ENCODE measurements at regions of chr22 and their contacts with region 1.

Region 1: DNA sequence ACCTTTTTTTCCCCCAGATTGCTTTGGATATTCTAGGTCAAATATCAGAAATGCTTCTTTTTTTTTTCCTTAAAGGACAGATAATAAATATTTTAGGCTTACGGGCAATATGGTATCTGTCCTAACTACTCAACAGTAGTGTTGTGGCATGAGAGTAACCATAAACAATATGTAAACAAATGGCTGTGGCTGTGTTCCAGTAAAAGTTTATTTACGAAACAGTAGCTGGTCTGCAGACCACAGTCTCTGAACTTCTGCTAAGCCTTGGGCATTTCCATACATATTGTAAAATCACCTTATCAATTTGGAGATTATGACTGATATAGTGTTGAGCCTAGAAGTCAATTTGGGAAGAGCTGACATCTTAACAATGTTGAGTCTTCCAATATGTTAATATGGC is 139.0 kb upstream of the PITPNB start:
- DNase-seq: no peak
- H3K4me3 ChIP-seq: no peak overlapping the region
- H3K27ac ChIP-seq: no peak overlapping the region
- H3K4me1 ChIP-seq: no peaks in the 10 kb centered on the region
- H3K27me3 ChIP-seq: no peaks in the 10 kb centered on the region
- CTCF ChIP-seq: no peak

Region 2: DNA sequence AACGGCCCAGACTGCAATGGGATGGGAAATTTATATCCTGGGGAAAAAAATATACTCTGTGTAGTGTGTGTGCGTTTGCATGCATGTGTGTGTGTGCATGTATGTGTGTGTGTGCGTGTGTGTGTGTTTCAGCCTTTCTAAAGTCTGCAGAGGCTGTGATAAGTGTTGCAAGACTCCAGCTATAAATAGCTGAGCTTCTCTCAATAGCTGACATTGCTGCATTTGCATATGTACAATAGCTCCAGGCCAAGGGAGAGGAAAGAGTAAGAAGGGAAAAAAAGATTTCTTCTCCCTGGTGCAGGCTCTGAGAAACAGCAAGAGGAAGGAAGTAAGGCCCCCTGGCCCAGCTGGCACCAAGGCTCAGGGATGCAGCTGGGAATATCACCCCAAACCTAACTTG is 739.5 kb before region 1 on chr22:
- CTCF ChIA-PET with region 1: no interaction called
- POLR2A ChIA-PET with region 1: no interaction called
- intact Hi-C with region 1: no loop called
- DNase-seq: peak in 1 of 2 experiments; percentile 0
- H3K4me3 ChIP-seq: no peak overlapping the region
- H3K27ac ChIP-seq: no peak overlapping the region
- H3K4me1 ChIP-seq: no peaks in the 10 kb centered on the region
- H3K27me3 ChIP-seq: no peaks in the 10 kb centered on the region
- CTCF ChIP-seq: no peak

Region 3: GRCh38 chr22:27990879-27991278 is 67.2 kb before region 1 on chr22:
- CTCF ChIA-PET with region 1: no interaction called
- POLR2A ChIA-PET with region 1: no interaction called
- intact Hi-C with region 1: no loop called
- DNase-seq: no peak
- H3K4me3 ChIP-seq: no peak overlapping the region
- H3K27ac ChIP-seq: no peak overlapping the region
- H3K4me1 ChIP-seq: no peaks in the 10 kb centered on the region
- H3K27me3 ChIP-seq: no peaks in the 10 kb centered on the region
- CTCF ChIP-seq: no peak

Region 4: DNA sequence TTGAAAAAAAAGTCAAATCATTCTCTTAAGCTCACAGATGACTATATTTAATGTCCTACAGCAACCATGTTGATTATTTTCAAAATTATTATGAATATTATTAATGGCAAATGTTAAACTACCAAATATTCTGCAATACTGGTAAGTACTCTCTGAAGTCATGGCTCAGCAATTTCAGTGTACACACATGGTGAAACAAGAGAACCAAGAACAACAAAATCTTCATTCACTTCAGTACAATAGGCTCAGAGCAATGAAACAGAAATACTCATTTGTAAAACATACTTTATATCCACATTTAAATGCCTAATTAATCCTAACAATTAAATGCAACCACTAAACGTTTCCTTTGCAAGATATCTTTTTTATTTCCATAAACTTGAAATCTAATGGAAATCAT is 274.4 kb after region 1 on chr22:
- CTCF ChIA-PET with region 1: no interaction called
- POLR2A ChIA-PET with region 1: interaction called, 10 read pairs
- intact Hi-C with region 1: no loop called
- DNase-seq: no peak
- H3K4me3 ChIP-seq: no peak overlapping the region
- H3K27ac ChIP-seq: no peak overlapping the region
- H3K4me1 ChIP-seq: no peaks in the 10 kb centered on the region
- H3K27me3 ChIP-seq: no peaks in the 10 kb centered on the region; the same call in 1 of the 2 replicates
- CTCF ChIP-seq: no peak